ENCODE measurements at regions of chr12 and their contacts with region 1.

Region 1: DNA sequence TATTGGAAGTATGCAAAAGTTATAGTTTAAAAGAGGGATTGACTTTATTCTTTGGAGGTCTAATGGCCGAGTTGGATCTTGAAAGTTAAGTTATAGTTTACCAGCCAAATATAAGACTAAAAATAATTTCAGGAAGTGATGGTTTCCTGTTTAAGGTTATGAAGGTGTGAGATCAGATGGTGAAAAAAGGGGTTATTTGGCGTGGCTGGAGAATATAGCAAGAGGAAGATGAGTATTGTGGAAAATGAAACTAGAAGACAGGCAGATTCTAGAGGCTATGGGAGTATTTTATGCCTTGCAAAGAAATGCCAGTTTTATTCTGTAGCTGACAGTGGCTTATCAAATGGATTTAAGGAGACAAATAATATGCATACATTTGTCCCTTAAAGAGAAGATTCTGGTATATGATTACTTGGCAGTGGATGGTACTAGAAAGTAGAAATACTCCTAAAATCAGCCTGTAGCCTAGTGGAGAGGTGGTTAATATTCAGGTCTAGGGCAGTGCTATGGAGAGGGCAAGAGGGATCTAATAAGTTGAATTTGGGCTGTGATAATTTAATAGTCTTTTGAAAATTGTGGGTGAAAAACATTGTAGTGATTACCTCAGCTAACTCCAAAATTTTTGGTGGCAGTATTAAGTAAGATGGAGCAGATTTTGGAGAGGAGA is 1091.8 kb upstream of the ATXN7L3B start:
- DNase-seq: no peak
- H3K4me3 ChIP-seq: no peak overlapping the region
- H3K27ac ChIP-seq: no peak overlapping the region
- H3K4me1 ChIP-seq: no peaks in the 10 kb centered on the region
- H3K27me3 ChIP-seq: no peaks in the 10 kb centered on the region

Region 2: DNA sequence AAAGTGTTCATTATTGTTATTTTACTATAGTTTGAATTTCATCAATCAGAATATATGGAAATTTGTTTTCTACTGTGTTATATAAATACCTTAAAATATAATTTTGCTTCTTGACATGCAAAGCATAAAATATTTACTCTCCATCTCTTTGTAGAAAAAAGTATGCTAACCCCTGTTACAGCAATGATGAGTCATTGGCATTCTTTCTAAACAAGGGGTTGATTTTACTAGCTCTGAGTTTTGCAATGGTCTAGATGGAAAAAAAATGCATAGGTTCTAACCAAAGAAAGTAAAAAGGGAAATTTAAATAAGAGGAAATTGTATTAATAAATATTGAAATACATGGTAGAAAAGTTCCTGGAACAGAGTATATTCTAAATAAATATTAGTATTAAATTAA is 101.6 kb after region 1 on chr12:
- in situ Hi-C with region 1: loop called (anchors 25 kb)
- DNase-seq: no peak
- H3K4me3 ChIP-seq: no peak overlapping the region
- H3K27ac ChIP-seq: no peak overlapping the region
- H3K4me1 ChIP-seq: no peaks in the 10 kb centered on the region
- H3K27me3 ChIP-seq: no peaks in the 10 kb centered on the region

Region 3: DNA sequence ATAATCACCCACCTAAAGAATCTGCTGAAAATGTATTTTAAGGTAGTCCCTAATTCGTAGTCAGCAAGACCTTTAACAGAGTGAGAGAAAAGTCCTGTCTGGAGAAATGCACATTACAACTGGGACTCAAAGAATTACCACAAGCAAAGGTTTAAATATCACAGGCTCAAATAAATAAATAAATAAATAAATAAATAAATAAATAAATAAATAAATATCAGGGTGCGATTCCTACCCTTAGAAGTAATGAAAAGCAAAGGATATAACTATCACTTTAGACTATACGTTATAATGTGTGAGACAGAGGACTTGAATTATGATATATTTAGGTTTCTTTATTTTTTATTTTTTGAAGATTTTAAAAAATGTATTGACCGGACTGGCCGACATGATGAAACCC is 569.3 kb after region 1 on chr12:
- in situ Hi-C with region 1: no loop called
- DNase-seq: no peak
- H3K4me3 ChIP-seq: no peak overlapping the region
- H3K27ac ChIP-seq: no peak overlapping the region
- H3K4me1 ChIP-seq: no peaks in the 10 kb centered on the region
- H3K27me3 ChIP-seq: no peaks in the 10 kb centered on the region

Measured in GM23248 (cell line).